ENCODE measurements at regions of chr13 and their contacts with region 1.

Region 1: GRCh38 chr13:50757008-50757407 is 86.5 kb downstream of the DLEU7 start:
- DNase-seq: peak; percentile 25
- H3K4me3 Mint-ChIP-seq: peak overlapping the region; percentile 27
- H3K27ac Mint-ChIP-seq: peak overlapping the region; percentile 88
- H3K4me1 Mint-ChIP-seq: peaks cover 8% of the 10 kb centered on the region
- H3K27me3 Mint-ChIP-seq: no peaks in the 10 kb centered on the region
- CTCF ChIP-seq: no peak

Region 2: GRCh38 chr13:50179977-50180376 is 577.0 kb before region 1 on chr13:
- CTCF ChIA-PET with region 1: no interaction called
- POLR2A ChIA-PET with region 1: no interaction called
- intact Hi-C with region 1: no loop called
- DNase-seq: no peak
- H3K4me3 Mint-ChIP-seq: no peak overlapping the region
- H3K27ac Mint-ChIP-seq: no peak overlapping the region
- H3K4me1 Mint-ChIP-seq: no peaks in the 10 kb centered on the region
- H3K27me3 Mint-ChIP-seq: no peaks in the 10 kb centered on the region
- CTCF ChIP-seq: no peak

Region 3: GRCh38 chr13:50613356-50613831 is 143.6 kb before region 1 on chr13:
- CTCF ChIA-PET with region 1: no interaction called
- POLR2A ChIA-PET with region 1: no interaction called
- intact Hi-C with region 1: no loop called
- DNase-seq: no peak
- H3K4me3 Mint-ChIP-seq: no peak overlapping the region
- H3K27ac Mint-ChIP-seq: no peak overlapping the region
- H3K4me1 Mint-ChIP-seq: peaks cover 15% of the 10 kb centered on the region
- H3K27me3 Mint-ChIP-seq: no peaks in the 10 kb centered on the region
- CTCF ChIP-seq: no peak

Region 4: GRCh38 chr13:50731400-50731799 is 25.6 kb before region 1 on chr13:
- CTCF ChIA-PET with region 1: interaction called, 3 read pairs
- POLR2A ChIA-PET with region 1: interaction called, 26 read pairs
- intact Hi-C with region 1: loop called (anchors 2 kb)
- DNase-seq: peak; percentile 86
- H3K4me3 Mint-ChIP-seq: peak overlapping the region; percentile 38
- H3K27ac Mint-ChIP-seq: peak overlapping the region; percentile 96
- H3K4me1 Mint-ChIP-seq: peaks cover 21% of the 10 kb centered on the region
- H3K27me3 Mint-ChIP-seq: no peaks in the 10 kb centered on the region
- CTCF ChIP-seq: no peak

Measured in MCF 10A (cell line).